Mucosa of descending colon (tissue), 3 donors: ENCODE measurements at regions of chr5 and their contacts with region 1.

Region 1: GRCh38 chr5:1523771-1524480 is at the start of gene LPCAT1:
- DNase-seq: peak; percentile 77 to 89 (median 87)
- ATAC-seq: peak; percentile 94
- H3K4me3 ChIP-seq: peak within 1 kb of the TSS; percentile 51
- H3K4me1 ChIP-seq: peaks cover 12% of the 10 kb centered on the region
- CTCF ChIP-seq: no peak
- total RNA-seq, gene LPCAT1: 6.7 to 27.2 (median 26.0) TPM

Region 2: DNA sequence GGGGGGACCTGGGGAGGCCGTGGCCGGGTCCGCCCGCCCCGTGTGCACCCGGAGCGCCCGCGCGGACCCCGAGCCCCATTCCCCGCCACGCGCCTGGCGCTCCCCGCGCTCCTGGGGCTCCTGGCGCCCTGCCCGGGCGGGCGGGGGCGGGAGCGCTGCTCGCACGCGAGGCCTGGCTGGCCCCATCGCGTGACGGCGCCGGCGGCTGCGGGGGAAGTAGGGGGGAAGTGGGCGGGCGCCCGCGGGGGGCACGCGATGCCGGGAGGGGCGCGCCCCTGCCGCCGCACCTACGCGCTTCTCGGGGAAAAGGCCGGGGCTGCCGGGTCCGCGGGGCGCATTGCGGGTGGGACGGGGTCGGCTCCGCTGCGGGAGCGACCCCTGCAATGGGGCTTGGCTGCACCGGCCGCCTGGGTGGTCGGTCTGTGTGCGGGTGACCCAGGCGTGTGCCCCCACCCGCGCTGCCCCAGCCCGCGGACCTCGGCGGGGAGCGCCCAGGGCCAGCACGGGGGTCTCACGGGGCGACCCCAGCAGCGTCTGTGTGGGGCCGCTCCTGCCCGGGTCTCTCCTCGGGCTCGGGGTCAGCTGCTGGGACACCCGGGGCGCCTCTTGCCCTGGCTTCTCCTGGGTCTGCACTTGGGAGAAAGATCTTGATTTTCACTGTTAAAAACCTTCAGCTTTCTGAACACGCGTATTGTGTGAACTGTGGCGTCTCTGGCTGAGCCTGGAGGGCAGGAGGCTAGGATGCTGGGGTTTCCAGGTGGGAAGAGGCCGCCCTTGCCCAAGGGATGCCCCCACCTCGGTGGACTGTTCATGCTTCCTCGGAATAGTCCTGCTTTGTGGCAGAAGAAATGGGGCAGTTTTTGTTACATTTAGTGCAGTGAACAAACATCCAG is 1150.0 kb before region 1 on chr5:
- intact Hi-C with region 1: loop called in 1 of 2 experiments (anchors 10 kb)
- DNase-seq: peak in 2 of 3 donors; percentile 41 to 71
- ATAC-seq: peak; percentile 59
- H3K4me3 ChIP-seq: no peak overlapping the region
- H3K4me1 ChIP-seq: peaks cover 5% of the 10 kb centered on the region
- CTCF ChIP-seq: no peak

Region 3: DNA sequence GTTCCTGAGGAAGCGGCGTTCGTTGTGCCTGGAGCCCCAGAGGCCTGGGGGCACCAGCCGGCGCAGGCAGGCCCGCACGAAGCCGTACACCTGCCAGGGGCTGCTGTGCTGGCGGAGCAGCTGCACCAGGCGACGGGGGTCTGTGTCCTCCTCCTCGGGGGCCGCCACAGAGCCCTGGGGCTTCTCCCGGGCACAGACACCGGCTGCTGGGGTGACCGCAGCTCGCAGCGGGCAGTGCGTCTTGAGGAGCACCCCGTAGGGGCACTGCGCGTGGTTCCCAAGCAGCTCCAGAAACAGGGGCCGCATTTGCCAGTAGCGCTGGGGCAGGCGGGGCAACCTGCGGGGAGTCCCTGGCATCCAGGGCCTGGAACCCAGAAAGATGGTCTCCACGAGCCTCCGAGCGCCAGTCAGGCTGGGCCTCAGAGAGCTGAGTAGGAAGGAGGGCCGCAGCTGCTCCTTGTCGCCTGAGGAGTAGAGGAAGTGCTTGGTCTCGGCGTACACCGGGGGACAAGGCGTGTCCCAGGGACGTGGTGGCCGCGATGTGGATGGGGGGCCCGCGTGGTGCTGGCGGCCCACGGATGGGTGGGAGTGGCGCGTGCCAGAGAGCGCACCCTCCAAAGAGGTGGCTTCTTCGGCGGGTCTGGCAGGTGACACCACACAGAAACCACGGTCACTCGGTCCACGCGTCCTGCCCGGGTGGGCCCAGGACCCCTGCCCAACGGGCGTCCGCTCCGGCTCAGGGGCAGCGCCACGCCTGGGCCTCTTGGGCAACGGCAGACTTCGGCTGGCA is 230.3 kb before region 1 on chr5:
- intact Hi-C with region 1: no loop called
- DNase-seq: peak in 1 of 3 donors; percentile 31
- ATAC-seq: no peak
- H3K4me3 ChIP-seq: no peak overlapping the region
- H3K4me1 ChIP-seq: peaks cover 14% of the 10 kb centered on the region
- CTCF ChIP-seq: no peak